A549 (cell line): ENCODE measurements at regions of chr2 and their contacts with region 1.

Region 1: GRCh38 chr2:60998628-60999545 is 18.6 kb upstream of the PEX13 start:
- DNase-seq: peak; percentile 46 to 67
- ATAC-seq: peak; percentile 65 to 86; a peak in 4 of 6 replicates
- H3K4me3 ChIP-seq: no peak overlapping the region
- H3K27ac ChIP-seq: no peak overlapping the region
- H3K4me1 ChIP-seq: no peaks in the 10 kb centered on the region
- CTCF ChIP-seq: peak; percentile 96
- EP300 ChIP-seq: no peak
- POLR2A ChIP-seq: no peak
- RAD21 ChIP-seq: peak; percentile 95 to 96

Region 2: GRCh38 chr2:60674524-60675165 is 324.2 kb before region 1 on chr2:
- CTCF ChIA-PET with region 1: interaction called, 13 read pairs
- POLR2A ChIA-PET with region 1: no interaction called
- DNase-seq: peak; percentile 82 to 85
- ATAC-seq: peak; percentile 98 to 100
- H3K4me3 ChIP-seq: no peak overlapping the region
- H3K27ac ChIP-seq: no peak overlapping the region
- H3K4me1 ChIP-seq: no peaks in the 10 kb centered on the region
- CTCF ChIP-seq: peak; percentile 92
- EP300 ChIP-seq: no peak
- POLR2A ChIP-seq: no peak
- RAD21 ChIP-seq: peak; percentile 72 to 80

Region 3: DNA sequence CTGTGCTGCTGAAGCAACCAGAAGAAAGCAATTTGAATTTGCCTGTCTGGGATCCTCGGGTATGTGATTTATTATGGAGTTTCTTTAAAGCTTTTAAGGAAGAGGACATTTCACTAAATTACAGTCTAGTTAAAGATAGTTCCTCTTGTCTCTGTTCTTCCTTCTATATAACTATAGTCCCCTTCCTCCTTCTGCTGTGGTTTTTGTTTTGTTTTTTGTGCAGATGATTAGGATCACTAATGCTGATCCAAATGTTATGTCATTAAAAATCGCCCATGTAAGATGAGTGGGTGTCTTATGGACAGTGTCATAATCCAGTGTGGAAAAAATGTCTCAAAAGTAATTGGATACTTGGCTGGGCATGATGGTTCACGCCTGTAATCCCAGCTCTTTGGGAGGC is 218.2 kb before region 1 on chr2:
- CTCF ChIA-PET with region 1: interaction called, 21 read pairs
- POLR2A ChIA-PET with region 1: no interaction called
- DNase-seq: no peak
- ATAC-seq: no peak
- H3K4me3 ChIP-seq: no peak overlapping the region
- H3K27ac ChIP-seq: no peak overlapping the region
- H3K4me1 ChIP-seq: no peaks in the 10 kb centered on the region
- CTCF ChIP-seq: no peak
- EP300 ChIP-seq: no peak
- POLR2A ChIP-seq: no peak
- RAD21 ChIP-seq: no peak

Region 4: GRCh38 chr2:60806988-60807681 is 191.8 kb before region 1 on chr2:
- CTCF ChIA-PET with region 1: interaction called, 26 read pairs
- POLR2A ChIA-PET with region 1: no interaction called
- DNase-seq: no peak
- ATAC-seq: no peak
- H3K4me3 ChIP-seq: no peak overlapping the region
- H3K27ac ChIP-seq: no peak overlapping the region
- H3K4me1 ChIP-seq: no peaks in the 10 kb centered on the region
- CTCF ChIP-seq: no peak
- EP300 ChIP-seq: no peak
- POLR2A ChIP-seq: no peak
- RAD21 ChIP-seq: no peak

Region 5: GRCh38 chr2:60832621-60833020 is 166.3 kb before region 1 on chr2:
- CTCF ChIA-PET with region 1: interaction called, 12 read pairs
- POLR2A ChIA-PET with region 1: no interaction called
- DNase-seq: no peak
- ATAC-seq: no peak
- H3K4me3 ChIP-seq: no peak overlapping the region
- H3K27ac ChIP-seq: no peak overlapping the region
- H3K4me1 ChIP-seq: no peaks in the 10 kb centered on the region
- CTCF ChIP-seq: no peak
- EP300 ChIP-seq: no peak
- POLR2A ChIP-seq: no peak
- RAD21 ChIP-seq: no peak

Region 6: DNA sequence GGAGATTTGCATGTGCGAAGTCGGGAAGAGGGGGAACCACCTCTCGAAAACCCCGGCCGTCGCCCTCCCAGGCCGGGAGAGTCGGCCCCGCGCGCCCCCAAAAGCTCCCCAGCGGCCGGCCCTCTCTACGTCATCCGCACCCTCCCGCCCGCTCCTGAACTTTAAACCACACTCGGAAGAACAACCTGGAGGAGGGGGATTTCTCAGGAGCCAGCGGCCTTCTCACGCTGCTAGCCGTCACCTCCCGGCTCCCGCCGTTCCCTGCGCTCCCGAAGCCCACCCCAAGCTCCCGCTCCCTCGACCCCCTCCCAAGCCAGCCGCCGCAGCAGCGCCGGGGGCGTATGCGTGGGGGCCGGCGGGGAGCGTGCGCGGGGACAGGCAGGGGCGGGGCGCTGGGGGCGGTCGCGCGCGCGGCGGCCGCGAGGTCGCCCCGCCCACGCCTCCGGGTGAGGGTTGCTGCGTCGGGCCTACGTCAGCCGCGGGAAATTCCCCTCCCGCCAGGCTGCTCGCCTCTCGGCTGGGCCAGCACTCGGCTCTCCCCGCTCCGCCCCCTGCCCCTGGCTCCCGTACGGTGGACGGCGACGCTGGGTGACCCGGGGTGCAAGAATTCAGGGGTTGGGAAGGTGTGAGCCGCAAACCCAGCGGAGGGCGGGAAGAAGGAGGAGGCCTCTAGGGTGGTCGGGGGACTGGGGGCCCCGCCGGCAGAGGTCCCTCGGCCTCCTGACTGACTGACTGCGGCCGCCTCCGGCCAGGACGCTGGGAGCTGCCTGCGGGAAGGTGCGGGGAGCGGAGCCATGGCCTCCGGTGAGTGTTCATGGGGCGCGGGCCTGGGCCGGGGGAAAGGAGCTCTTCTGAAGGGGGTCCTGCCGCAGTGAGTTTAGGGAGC is 117.6 kb before region 1 on chr2 and contains the start of gene REL:
- CTCF ChIA-PET with region 1: interaction called, 25 read pairs
- POLR2A ChIA-PET with region 1: interaction called, 4 read pairs
- DNase-seq: peak; percentile 78 to 93
- ATAC-seq: peak; percentile 93 to 94
- H3K4me3 ChIP-seq: peak within 1 kb of the TSS; percentile 67
- H3K27ac ChIP-seq: peak within 1 kb of the TSS; percentile 95
- H3K4me1 ChIP-seq: peaks cover 25% of the 10 kb centered on the region
- CTCF ChIP-seq: no peak
- EP300 ChIP-seq: no peak; a peak in 1 of 5 replicates
- POLR2A ChIP-seq: no peak; the same call in none of the 2 replicates
- RAD21 ChIP-seq: no peak; a peak in 1 of 5 replicates
- polyA plus RNA-seq, gene REL: 9.3 and 11.3 TPM in 2 replicates

Region 7: GRCh38 chr2:60987041-60987440 is 11.8 kb before region 1 on chr2:
- CTCF ChIA-PET with region 1: interaction called, 22 read pairs
- POLR2A ChIA-PET with region 1: no interaction called
- DNase-seq: no peak
- ATAC-seq: no peak
- H3K4me3 ChIP-seq: no peak overlapping the region
- H3K27ac ChIP-seq: no peak overlapping the region
- H3K4me1 ChIP-seq: peaks cover 9% of the 10 kb centered on the region
- CTCF ChIP-seq: no peak
- EP300 ChIP-seq: no peak
- POLR2A ChIP-seq: no peak
- RAD21 ChIP-seq: no peak

Region 8: GRCh38 chr2:61044636-61045035 is 45.7 kb after region 1 on chr2:
- CTCF ChIA-PET with region 1: no interaction called
- POLR2A ChIA-PET with region 1: no interaction called
- DNase-seq: no peak
- ATAC-seq: no peak
- H3K4me3 ChIP-seq: no peak overlapping the region
- H3K27ac ChIP-seq: no peak overlapping the region
- H3K4me1 ChIP-seq: no peaks in the 10 kb centered on the region; the same call in 2 of the 3 replicates
- CTCF ChIP-seq: no peak
- EP300 ChIP-seq: no peak
- POLR2A ChIP-seq: no peak
- RAD21 ChIP-seq: no peak